ENCODE measurements at regions of chr5 and their contacts with region 1.

Region 1: GRCh38 chr5:148090773-148091221 is 27.0 kb downstream of the SPINK5 start:
- DNase-seq: no peak
- ATAC-seq: no peak
- H3K4me3 ChIP-seq: no peak overlapping the region
- H3K27ac ChIP-seq: peak overlapping the region in 2 of 10 donors; percentile 32 to 40
- H3K4me1 ChIP-seq: peaks cover 0 to 23% (median 0%) of the 10 kb centered on the region in 9 donors
- H3K27me3 ChIP-seq: no peaks in the 10 kb centered on the region
- CTCF ChIP-seq: no peak

Region 2: GRCh38 chr5:147887024-147887627 is 203.7 kb before region 1 on chr5:
- intact Hi-C with region 1: no loop called
- DNase-seq: no peak
- ATAC-seq: no peak
- H3K4me3 ChIP-seq: no peak overlapping the region
- H3K27ac ChIP-seq: no peak overlapping the region
- H3K4me1 ChIP-seq: peaks cover 0 to 10% (median 2%) of the 10 kb centered on the region in 9 donors
- H3K27me3 ChIP-seq: no peaks in the 10 kb centered on the region
- CTCF ChIP-seq: peak; percentile 8 to 69 (median 59)

Region 3: DNA sequence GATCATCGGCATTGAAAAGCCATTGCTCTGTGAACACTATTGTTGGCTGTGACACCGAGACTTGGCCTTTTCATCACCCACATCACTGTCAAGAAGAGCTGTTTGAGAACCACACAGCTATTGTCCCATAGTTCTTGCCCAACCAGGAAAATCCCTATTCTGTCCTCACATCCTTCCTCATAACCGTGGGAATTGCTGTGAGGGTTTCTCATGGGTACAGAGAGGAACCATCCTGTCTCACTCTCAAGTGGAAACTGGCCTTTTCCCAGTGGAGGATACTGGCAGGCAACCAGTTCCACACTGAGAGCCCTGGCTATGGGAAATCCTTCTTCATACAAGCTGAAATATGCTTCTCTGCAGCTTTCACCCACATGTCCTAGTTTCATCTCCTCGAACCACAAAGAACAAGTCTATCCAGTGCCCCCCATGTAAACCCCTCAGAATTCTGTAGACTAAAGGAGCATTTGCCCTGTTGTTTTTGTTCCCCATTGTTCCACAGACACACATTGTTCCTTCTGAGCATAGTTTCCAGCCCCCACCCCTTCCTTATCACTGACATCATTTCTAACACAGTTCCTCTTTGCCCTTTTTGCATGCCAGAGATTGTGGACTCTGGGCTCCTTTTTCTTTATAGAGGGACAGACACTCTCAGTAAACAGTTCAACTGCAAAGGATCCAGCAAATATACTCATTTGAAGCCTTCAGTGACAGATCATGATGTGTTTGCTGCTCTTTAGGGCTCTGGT is 126.7 kb before region 1 on chr5:
- intact Hi-C with region 1: loop called in 1 of 10 experiments (anchors 5 kb)
- DNase-seq: peak; percentile 7 to 44
- ATAC-seq: peak; percentile 58 to 95 (median 91)
- H3K4me3 ChIP-seq: no peak overlapping the region
- H3K27ac ChIP-seq: peak overlapping the region; percentile 59 to 89 (median 74)
- H3K4me1 ChIP-seq: peaks cover 0 to 36% (median 15%) of the 10 kb centered on the region in 9 donors
- H3K27me3 ChIP-seq: peaks cover 0 to 2% (median 0%) of the 10 kb centered on the region in 7 donors
- CTCF ChIP-seq: no peak

Region 4: DNA sequence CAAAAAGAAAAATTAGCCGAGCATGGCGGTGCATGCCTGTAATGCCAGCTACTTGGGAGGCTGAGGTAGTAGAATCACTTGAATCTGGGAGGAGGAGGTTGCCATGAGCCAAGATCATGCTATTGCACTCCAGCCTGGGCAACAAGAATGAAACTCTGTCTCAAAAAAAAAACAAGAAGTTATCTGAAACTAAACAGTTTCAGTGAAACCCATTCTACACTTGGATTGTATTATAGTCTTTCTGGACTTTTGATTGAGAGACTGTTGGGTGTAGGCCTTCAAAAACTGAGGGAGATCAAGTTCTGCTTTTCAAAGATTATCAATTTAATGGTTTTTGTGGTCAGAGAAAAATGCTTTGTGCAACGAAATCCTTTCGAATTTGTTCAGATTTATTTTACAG is 61.7 kb before region 1 on chr5:
- intact Hi-C with region 1: loop called in 1 of 10 experiments (anchors 5 kb)
- DNase-seq: no peak
- ATAC-seq: no peak
- H3K4me3 ChIP-seq: no peak overlapping the region
- H3K27ac ChIP-seq: no peak overlapping the region
- H3K4me1 ChIP-seq: peaks cover 0 to 10% (median 0%) of the 10 kb centered on the region in 9 donors
- H3K27me3 ChIP-seq: no peaks in the 10 kb centered on the region
- CTCF ChIP-seq: no peak